OCI-LY7 (cell line): ENCODE measurements at regions of chr5 and their contacts with region 1.

Region 1: GRCh38 chr5:80255732-80256479 is at the start of gene SERINC5:
- DNase-seq: peak; percentile 89
- H3K4me3 ChIP-seq: peak within 1 kb of the TSS; percentile 88
- H3K27ac ChIP-seq: peak within 1 kb of the TSS; percentile 72
- H3K4me1 ChIP-seq: peaks cover 40% of the 10 kb centered on the region
- CTCF ChIP-seq: no peak
- total RNA-seq, gene SERINC5: 21.6 and 31.2 TPM in 2 replicates

Region 2: DNA sequence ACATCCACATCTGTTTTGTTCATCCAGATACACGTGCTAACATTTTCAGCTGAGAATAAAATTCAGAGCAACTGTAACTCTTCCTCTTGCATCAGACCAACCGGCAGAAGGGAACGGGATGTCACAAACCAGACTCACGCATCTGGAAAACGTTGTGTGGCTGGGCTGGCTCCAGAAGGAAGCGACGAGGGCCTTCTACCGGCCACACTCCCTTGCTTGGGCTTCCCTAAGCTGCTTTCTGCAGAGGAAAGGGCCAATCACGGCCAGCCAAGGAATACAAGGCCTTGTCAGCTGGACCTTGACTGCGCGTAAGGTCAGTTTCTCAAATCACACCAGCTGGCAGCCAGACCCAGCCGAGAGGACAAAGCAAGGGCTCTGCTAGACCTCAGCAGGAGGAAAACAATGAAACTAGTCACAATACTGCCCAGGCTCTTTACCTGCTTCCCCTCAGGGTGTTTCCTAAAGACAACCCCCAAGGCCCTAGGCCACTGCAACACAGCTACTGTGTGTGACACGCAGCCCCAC is 114.7 kb before region 1 on chr5:
- CTCF ChIA-PET with region 1: no interaction called
- POLR2A ChIA-PET with region 1: interaction called, 3 read pairs
- intact Hi-C with region 1: loop called (anchors 5 kb)
- DNase-seq: no peak
- H3K4me3 ChIP-seq: no peak overlapping the region
- H3K27ac ChIP-seq: peak overlapping the region; percentile 75
- H3K4me1 ChIP-seq: peaks cover 42% of the 10 kb centered on the region
- CTCF ChIP-seq: no peak

Region 3: GRCh38 chr5:80191991-80192398 is 63.9 kb before region 1 on chr5:
- CTCF ChIA-PET with region 1: interaction called, 5 read pairs
- POLR2A ChIA-PET with region 1: interaction called, 36 read pairs
- intact Hi-C with region 1: loop called (anchors 1 kb)
- DNase-seq: peak; percentile 54
- H3K4me3 ChIP-seq: peak overlapping the region; percentile 54
- H3K27ac ChIP-seq: peak overlapping the region; percentile 98
- H3K4me1 ChIP-seq: peaks cover 93% of the 10 kb centered on the region
- CTCF ChIP-seq: no peak

Region 4: GRCh38 chr5:80238778-80239679 is 16.9 kb before region 1 on chr5:
- CTCF ChIA-PET with region 1: no interaction called
- POLR2A ChIA-PET with region 1: interaction called, 15 read pairs
- intact Hi-C with region 1: no loop called
- DNase-seq: no peak
- H3K4me3 ChIP-seq: peak overlapping the region; percentile 40
- H3K27ac ChIP-seq: peak overlapping the region; percentile 35
- H3K4me1 ChIP-seq: peaks cover 48% of the 10 kb centered on the region
- CTCF ChIP-seq: no peak